ENCODE measurements at regions of chr4 and their contacts with region 1.

Region 1: DNA sequence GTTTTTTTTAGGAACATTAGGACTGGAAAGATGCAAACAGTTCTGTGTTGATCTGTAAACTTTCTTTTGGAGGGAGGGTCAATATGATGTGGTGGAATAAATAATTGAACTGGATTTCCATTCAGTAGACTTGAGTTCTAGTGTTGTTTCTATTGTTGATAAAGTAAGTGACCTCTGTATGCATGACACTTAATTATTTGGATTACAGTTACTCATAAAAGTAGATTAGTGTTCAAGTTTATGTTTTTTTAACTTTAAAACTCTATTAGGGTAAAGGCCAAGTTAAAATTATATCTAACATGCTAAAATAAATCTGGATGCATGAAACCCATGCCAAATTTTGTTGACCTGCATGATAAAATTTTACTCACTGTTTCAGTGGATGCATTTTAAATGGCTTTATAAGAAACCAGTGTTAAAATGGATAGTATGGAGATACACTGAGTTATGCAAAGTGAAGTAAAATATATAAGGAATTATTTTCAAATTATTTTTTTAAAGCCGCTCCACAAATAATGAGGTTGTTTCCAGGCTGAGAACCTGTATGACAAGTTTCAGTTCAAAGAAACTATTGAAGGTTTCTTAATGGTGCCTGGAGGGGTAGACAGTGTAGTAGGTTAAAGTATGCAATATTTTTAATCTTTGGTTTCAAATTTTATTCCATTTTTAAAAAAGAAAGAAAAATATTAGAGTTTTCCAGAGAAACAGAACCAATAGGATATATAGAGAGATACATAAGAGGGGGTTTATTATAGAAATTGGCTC is 85.5 kb upstream of the NR3C2 start:
- DNase-seq: no peak
- ATAC-seq: no peak
- H3K4me3 ChIP-seq: no peak overlapping the region
- H3K27ac ChIP-seq: no peak overlapping the region
- H3K4me1 ChIP-seq: no peaks in the 10 kb centered on the region
- H3K27me3 ChIP-seq: no peaks in the 10 kb centered on the region
- CTCF ChIP-seq: no peak

Region 2: DNA sequence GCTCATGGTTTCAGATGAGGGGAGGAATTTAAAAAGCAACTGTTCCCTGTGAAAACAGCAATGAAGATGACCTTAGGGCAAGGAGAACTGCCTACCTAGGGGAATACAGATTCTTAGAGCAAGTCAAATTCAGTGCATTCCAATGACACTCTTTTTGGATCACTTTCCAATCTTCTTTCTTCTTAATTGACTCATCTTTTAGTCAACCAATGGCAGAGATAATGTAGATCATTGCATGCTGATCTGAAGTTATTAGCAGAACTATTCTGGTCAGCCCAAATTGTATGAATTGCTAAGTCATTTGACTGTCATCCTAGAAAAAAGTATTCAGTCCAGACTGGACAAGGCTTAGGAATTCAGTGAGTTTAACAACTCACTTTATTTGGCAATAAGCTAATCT is 72.9 kb before region 1 on chr4:
- intact Hi-C with region 1: loop called in 1 of 10 experiments (anchors 10 kb)
- DNase-seq: no peak
- ATAC-seq: no peak
- H3K4me3 ChIP-seq: no peak overlapping the region
- H3K27ac ChIP-seq: no peak overlapping the region
- H3K4me1 ChIP-seq: no peaks in the 10 kb centered on the region
- H3K27me3 ChIP-seq: no peaks in the 10 kb centered on the region
- CTCF ChIP-seq: no peak

Region 3: GRCh38 chr4:148649652-148650331 is 122.0 kb after region 1 on chr4:
- intact Hi-C with region 1: no loop called
- DNase-seq: no peak
- ATAC-seq: no peak
- H3K4me3 ChIP-seq: no peak overlapping the region
- H3K27ac ChIP-seq: no peak overlapping the region
- H3K4me1 ChIP-seq: no peaks in the 10 kb centered on the region
- H3K27me3 ChIP-seq: no peaks in the 10 kb centered on the region
- CTCF ChIP-seq: no peak

Measured in heart right ventricle (tissue), 16 donors.